ENCODE measurements at regions of chrX and their contacts with region 1.

Region 1: GRCh38 chrX:103175944-103176753 is 38.8 kb upstream of the BEX4 start:
- DNase-seq: peak; percentile 39 to 54
- H3K4me3 ChIP-seq: no peak overlapping the region
- H3K4me3 Mint-ChIP-seq: no peak overlapping the region
- H3K27ac Mint-ChIP-seq: no peak overlapping the region
- H3K4me1 ChIP-seq: no peaks in the 10 kb centered on the region
- H3K4me1 Mint-ChIP-seq: peaks cover 5% of the 10 kb centered on the region
- H3K27me3 ChIP-seq: no peaks in the 10 kb centered on the region
- H3K27me3 Mint-ChIP-seq: peaks cover 6% of the 10 kb centered on the region
- CTCF ChIP-seq: peak; percentile 64 to 72

Region 2: DNA sequence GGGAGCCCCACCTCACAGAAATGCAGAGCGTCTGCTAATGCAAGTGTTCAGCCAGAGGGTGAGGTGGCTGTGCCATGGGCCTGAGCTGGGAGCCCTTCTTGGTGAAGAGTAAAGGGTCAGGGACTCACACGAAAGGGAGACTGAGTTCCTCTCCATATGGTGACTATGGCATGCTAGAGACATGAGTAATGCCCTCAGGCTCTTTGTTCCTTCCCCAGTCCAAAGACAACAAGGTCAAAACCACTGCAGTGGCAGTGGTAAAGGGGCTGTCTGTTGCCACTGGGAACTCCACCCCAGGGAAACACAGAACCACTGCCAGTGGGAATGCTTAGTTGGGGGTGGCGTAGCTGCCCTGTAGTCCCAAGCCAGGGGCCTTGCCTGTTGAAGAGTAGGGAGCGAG is 216.7 kb before region 1 on chrX:
- CTCF ChIA-PET with region 1: interaction called, 5 read pairs
- POLR2A ChIA-PET with region 1: no interaction called
- intact Hi-C with region 1: loop called (anchors 2 kb)
- DNase-seq: no peak
- H3K4me3 ChIP-seq: no peak overlapping the region
- H3K4me3 Mint-ChIP-seq: no peak overlapping the region
- H3K27ac Mint-ChIP-seq: no peak overlapping the region
- H3K4me1 ChIP-seq: no peaks in the 10 kb centered on the region
- H3K4me1 Mint-ChIP-seq: no peaks in the 10 kb centered on the region
- H3K27me3 ChIP-seq: no peaks in the 10 kb centered on the region
- H3K27me3 Mint-ChIP-seq: no peaks in the 10 kb centered on the region
- CTCF ChIP-seq: no peak

Region 3: GRCh38 chrX:102985192-102985591 is 191.0 kb before region 1 on chrX:
- CTCF ChIA-PET with region 1: no interaction called
- POLR2A ChIA-PET with region 1: no interaction called
- intact Hi-C with region 1: no loop called
- DNase-seq: no peak
- H3K4me3 ChIP-seq: no peak overlapping the region
- H3K4me3 Mint-ChIP-seq: no peak overlapping the region
- H3K27ac Mint-ChIP-seq: no peak overlapping the region
- H3K4me1 ChIP-seq: no peaks in the 10 kb centered on the region
- H3K4me1 Mint-ChIP-seq: no peaks in the 10 kb centered on the region
- H3K27me3 ChIP-seq: no peaks in the 10 kb centered on the region
- H3K27me3 Mint-ChIP-seq: no peaks in the 10 kb centered on the region
- CTCF ChIP-seq: no peak

Region 4: DNA sequence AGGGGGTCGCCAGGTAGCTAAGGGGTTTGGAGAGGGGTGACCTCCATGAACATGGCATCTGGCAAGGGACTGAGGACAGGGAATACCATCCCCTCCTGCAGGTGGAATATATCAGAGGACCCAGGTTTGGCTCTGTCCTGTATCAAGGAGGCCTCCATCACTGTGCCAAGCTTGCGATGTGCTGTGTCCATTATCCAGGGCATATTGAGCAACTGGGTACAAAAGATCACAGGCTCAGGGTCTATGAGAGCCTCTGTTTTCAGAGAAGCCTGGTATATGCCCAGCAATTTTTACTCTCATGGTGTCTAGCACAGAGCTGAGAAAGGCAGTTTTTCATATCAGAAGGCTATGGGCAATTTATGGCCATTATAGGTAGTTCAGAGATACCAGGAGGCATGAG is 117.0 kb after region 1 on chrX:
- CTCF ChIA-PET with region 1: no interaction called
- POLR2A ChIA-PET with region 1: no interaction called
- intact Hi-C with region 1: no loop called
- DNase-seq: no peak
- H3K4me3 ChIP-seq: no peak overlapping the region
- H3K4me3 Mint-ChIP-seq: no peak overlapping the region
- H3K27ac Mint-ChIP-seq: no peak overlapping the region
- H3K4me1 ChIP-seq: no peaks in the 10 kb centered on the region
- H3K4me1 Mint-ChIP-seq: no peaks in the 10 kb centered on the region
- H3K27me3 ChIP-seq: no peaks in the 10 kb centered on the region
- H3K27me3 Mint-ChIP-seq: peaks cover 3% of the 10 kb centered on the region
- CTCF ChIP-seq: no peak

Measured in Caco-2 (cell line).